ENCODE measurements at regions of chr7 and their contacts with region 1.

Region 1: GRCh38 chr7:91880413-91881241 is at the start of gene MTERF1:
- DNase-seq: peak; percentile 95
- ATAC-seq: peak; percentile 99 to 100
- H3K4me3 ChIP-seq: peak within 1 kb of the TSS; percentile 79
- H3K27ac ChIP-seq: peak within 1 kb of the TSS; percentile 66
- H3K4me1 ChIP-seq: peaks cover 19% of the 10 kb centered on the region
- H3K27me3 ChIP-seq: no peaks in the 10 kb centered on the region
- CTCF ChIP-seq: peak; percentile 93
- total RNA-seq, gene MTERF1: 11.5 TPM

Region 2: GRCh38 chr7:91089382-91089963 is 791.2 kb before region 1 on chr7:
- intact Hi-C with region 1: loop called (anchors 10 kb)
- DNase-seq: no peak
- ATAC-seq: peak; percentile 78 to 81
- H3K4me3 ChIP-seq: peak overlapping the region; percentile 27
- H3K27ac ChIP-seq: no peak overlapping the region
- H3K4me1 ChIP-seq: no peaks in the 10 kb centered on the region
- H3K27me3 ChIP-seq: no peaks in the 10 kb centered on the region
- CTCF ChIP-seq: peak; percentile 74